ENCODE measurements at regions of chr12 and their contacts with region 1.

Region 1: DNA sequence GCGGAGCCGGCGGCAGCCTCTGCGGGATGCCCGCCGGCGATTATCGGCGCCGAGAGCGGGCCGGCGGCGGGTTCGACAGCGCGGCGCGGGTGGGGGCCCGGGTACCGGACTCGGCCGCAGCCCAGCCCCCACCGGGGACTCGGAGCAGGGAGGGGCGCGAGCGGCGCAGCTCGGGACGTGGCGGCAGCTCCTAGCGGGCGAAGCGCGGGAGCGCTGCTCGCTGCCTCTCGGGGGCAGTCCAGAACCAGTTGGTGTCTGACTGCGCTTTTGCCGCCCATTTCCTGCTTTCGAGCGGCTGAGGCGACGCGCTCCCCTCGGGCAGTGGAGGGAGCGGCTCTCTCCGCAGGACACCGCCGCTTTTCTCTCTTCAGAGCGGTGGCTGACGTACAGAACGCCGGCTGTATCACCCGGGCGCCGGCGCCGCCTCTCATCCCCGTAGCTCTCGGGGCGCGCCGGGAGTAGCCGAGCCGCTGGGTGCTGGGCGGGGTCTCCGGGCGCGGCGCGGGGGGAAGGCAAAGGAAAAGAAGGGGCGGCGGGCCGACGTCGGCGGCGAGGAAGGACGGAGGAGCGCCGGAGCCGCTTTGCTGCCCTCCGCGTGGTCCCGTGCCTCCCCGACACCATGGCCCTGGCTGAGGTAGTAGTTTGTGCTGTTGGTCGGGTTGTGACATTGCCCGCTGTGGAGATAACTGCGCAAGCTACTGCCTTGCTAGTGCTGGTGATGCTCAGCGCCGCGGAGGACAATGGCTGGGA is 136.6 kb downstream of the MON2 start:
- DNase-seq: peak; percentile 79
- H3K4me3 Mint-ChIP-seq: peak overlapping the region; percentile 86
- H3K27ac Mint-ChIP-seq: peak overlapping the region; percentile 99
- H3K4me1 Mint-ChIP-seq: peaks cover 35% of the 10 kb centered on the region
- H3K27me3 Mint-ChIP-seq: no peaks in the 10 kb centered on the region

Region 2: GRCh38 chr12:62259993-62260732 is 343.1 kb before region 1 on chr12 and contains the start of gene USP15:
- CTCF ChIA-PET with region 1: no interaction called
- intact Hi-C with region 1: loop called (anchors 1 kb)
- DNase-seq: peak; percentile 96
- H3K4me3 Mint-ChIP-seq: peak within 1 kb of the TSS; percentile 85
- H3K27ac Mint-ChIP-seq: peak within 1 kb of the TSS; percentile 98
- H3K4me1 Mint-ChIP-seq: peaks cover 58% of the 10 kb centered on the region
- H3K27me3 Mint-ChIP-seq: no peaks in the 10 kb centered on the region
- total RNA-seq, gene USP15: 84.5 to 95.5 TPM

Region 3: GRCh38 chr12:62522984-62523383 is 80.3 kb before region 1 on chr12:
- CTCF ChIA-PET with region 1: interaction called, 4 read pairs
- intact Hi-C with region 1: loop called (anchors 1 kb)
- DNase-seq: no peak
- H3K4me3 Mint-ChIP-seq: no peak overlapping the region
- H3K27ac Mint-ChIP-seq: no peak overlapping the region
- H3K4me1 Mint-ChIP-seq: peaks cover 36% of the 10 kb centered on the region
- H3K27me3 Mint-ChIP-seq: no peaks in the 10 kb centered on the region

Region 4: DNA sequence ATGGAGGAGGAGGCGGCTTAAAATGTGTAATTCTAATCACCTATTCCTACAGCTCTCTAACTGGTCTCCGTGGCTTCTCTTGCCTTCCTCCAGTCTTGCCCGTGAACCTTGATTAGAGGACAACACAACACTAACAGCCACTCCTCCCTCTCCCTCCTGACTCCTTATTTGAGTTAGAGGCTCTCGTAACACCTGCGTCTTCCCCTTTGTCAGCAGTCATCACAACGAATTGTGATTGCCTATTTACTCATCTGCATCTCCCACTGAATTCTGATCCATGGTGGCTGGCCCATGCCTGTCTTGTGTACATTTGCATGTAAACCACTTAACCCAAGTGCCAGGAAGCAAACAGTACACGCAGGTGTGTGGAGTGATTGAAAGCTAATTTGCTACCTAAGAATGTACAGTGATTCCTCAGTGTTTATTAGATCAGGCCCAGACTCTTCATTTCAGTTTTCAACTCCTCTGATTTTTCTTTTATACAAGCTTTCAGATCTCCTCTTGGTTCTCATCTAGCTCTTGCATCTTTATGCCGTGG is 17.9 kb after region 1 on chr12:
- CTCF ChIA-PET with region 1: no interaction called
- intact Hi-C with region 1: no loop called
- DNase-seq: no peak
- H3K4me3 Mint-ChIP-seq: no peak overlapping the region
- H3K27ac Mint-ChIP-seq: no peak overlapping the region
- H3K4me1 Mint-ChIP-seq: peaks cover 9% of the 10 kb centered on the region
- H3K27me3 Mint-ChIP-seq: peaks cover 2% of the 10 kb centered on the region

Region 5: GRCh38 chr12:62640910-62641448 is 37.7 kb after region 1 on chr12:
- CTCF ChIA-PET with region 1: interaction called, 9 read pairs
- intact Hi-C with region 1: loop called (anchors 1 kb)
- DNase-seq: peak; percentile 71
- H3K4me3 Mint-ChIP-seq: peak overlapping the region; percentile 48
- H3K27ac Mint-ChIP-seq: peak overlapping the region; percentile 67
- H3K4me1 Mint-ChIP-seq: peaks cover 18% of the 10 kb centered on the region
- H3K27me3 Mint-ChIP-seq: peaks cover under 1% of the 10 kb centered on the region

Region 6: GRCh38 chr12:62673028-62673815 is 70.0 kb after region 1 on chr12:
- CTCF ChIA-PET with region 1: no interaction called
- intact Hi-C with region 1: no loop called
- DNase-seq: no peak
- H3K4me3 Mint-ChIP-seq: no peak overlapping the region
- H3K27ac Mint-ChIP-seq: no peak overlapping the region
- H3K4me1 Mint-ChIP-seq: no peaks in the 10 kb centered on the region
- H3K27me3 Mint-ChIP-seq: peaks cover 5% of the 10 kb centered on the region

Region 7: DNA sequence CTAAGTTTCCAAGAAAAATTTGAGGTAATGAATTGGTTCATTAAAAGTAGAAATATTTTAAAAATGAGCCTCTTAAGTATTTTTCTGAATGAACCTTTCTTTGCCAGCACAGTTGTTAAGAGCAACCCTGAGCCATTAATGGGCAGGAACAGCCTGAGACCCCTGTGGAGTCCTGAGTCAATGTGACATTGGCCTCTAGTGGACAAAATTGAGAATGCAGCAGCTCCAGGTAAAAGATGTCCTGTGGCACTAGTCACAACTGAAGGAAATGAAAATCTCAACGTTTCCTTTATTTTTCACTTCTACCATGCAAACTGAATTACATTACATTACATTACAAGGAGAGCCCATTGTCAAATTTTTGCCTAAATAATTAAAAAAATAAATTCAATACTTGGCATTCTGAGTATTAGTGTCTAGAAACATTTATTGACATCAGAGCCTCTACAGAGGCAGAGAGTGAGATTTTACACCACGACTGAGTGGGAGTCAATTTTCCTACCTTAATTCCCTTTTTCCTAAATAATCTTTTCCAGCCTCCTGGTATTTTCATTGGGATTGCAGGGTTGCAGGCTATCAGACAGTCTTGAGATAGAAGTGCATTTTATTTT is 196.0 kb after region 1 on chr12:
- CTCF ChIA-PET with region 1: interaction called, 10 read pairs
- intact Hi-C with region 1: loop called (anchors 1 kb)
- DNase-seq: peak; percentile 71
- H3K4me3 Mint-ChIP-seq: no peak overlapping the region
- H3K27ac Mint-ChIP-seq: no peak overlapping the region
- H3K4me1 Mint-ChIP-seq: no peaks in the 10 kb centered on the region
- H3K27me3 Mint-ChIP-seq: no peaks in the 10 kb centered on the region

Measured in activated naive CD4-positive, alpha-beta T cell treated with anti-CD3 and anti-CD28 coated beads for 36 hours (primary cell).